ENCODE measurements at regions of chr21 and their contacts with region 1.

Region 1: GRCh38 chr21:31326522-31327242 is 17.4 kb downstream of the TIAM1 start:
- DNase-seq: no peak
- H3K4me3 ChIP-seq: no peak overlapping the region
- H3K27ac ChIP-seq: no peak overlapping the region
- H3K4me1 ChIP-seq: no peaks in the 10 kb centered on the region
- H3K27me3 ChIP-seq: no peaks in the 10 kb centered on the region
- CTCF ChIP-seq: no peak
- POLR2A ChIP-seq: no peak

Region 2: DNA sequence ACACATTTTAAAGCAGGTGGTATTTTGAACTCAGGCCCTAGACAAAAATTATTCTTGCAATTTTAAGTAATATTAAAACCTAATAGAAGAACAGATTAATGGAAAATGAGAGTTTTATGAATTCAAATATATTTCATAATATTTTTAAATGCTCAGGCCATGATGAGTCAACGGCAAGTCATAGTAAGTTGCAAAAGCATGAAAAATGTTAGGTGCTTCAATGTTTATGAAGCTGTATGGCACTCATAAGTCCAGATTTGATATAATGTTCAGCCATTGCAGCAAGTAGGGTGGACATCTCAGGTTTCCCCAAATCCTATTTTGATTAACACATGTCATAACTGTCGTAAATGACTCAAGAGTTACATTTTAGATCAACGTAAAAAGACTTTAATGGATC is 1499.4 kb before region 1 on chr21:
- intact Hi-C with region 1: no loop called
- DNase-seq: no peak
- H3K4me3 ChIP-seq: no peak overlapping the region
- H3K27ac ChIP-seq: no peak overlapping the region
- H3K4me1 ChIP-seq: no peaks in the 10 kb centered on the region
- H3K27me3 ChIP-seq: no peaks in the 10 kb centered on the region
- CTCF ChIP-seq: no peak
- POLR2A ChIP-seq: no peak

Region 3: DNA sequence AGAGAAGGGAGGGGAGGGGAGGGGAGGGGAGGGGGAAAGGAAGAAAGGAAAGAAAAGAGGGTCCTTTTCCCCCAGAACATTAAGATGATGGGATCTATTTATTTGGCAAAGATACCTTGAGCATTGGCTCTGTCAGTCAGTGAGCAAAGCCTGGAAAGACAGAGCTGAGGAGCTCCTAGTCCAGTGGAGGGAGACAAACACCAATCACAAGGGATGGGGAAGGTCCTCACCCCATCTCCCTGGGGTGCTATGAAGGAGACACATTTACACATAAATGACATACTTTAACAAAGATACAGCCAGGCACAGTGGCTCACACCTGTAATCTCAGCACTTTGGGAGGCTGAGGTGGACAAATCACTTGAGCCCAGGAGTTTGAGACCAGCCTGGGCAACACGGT is 172.3 kb after region 1 on chr21:
- intact Hi-C with region 1: no loop called
- DNase-seq: no peak
- H3K4me3 ChIP-seq: no peak overlapping the region
- H3K27ac ChIP-seq: no peak overlapping the region
- H3K4me1 ChIP-seq: no peaks in the 10 kb centered on the region
- H3K27me3 ChIP-seq: no peaks in the 10 kb centered on the region
- CTCF ChIP-seq: no peak
- POLR2A ChIP-seq: no peak

Region 4: GRCh38 chr21:31558962-31559367 is 232.3 kb after region 1 on chr21:
- intact Hi-C with region 1: no loop called
- DNase-seq: peak; percentile 78 to 84
- H3K4me3 ChIP-seq: peak overlapping the region; percentile 47 to 91 (median 69)
- H3K27ac ChIP-seq: no peak overlapping the region
- H3K4me1 ChIP-seq: peaks cover 0 to 17% of the 10 kb centered on the region in 2 donors
- H3K27me3 ChIP-seq: peaks cover 7 to 16% of the 10 kb centered on the region in 2 donors
- CTCF ChIP-seq: no peak
- POLR2A ChIP-seq: no peak

Region 5: GRCh38 chr21:32135401-32136363 is 809.0 kb after region 1 on chr21:
- intact Hi-C with region 1: loop called (anchors 10 kb)
- DNase-seq: no peak
- H3K4me3 ChIP-seq: peak overlapping the region in 1 of 3 donors; percentile 22
- H3K27ac ChIP-seq: no peak overlapping the region
- H3K4me1 ChIP-seq: no peaks in the 10 kb centered on the region
- H3K27me3 ChIP-seq: no peaks in the 10 kb centered on the region
- CTCF ChIP-seq: no peak
- POLR2A ChIP-seq: no peak

Measured in breast epithelium (tissue), 4 donors.